ENCODE measurements at regions of chr14 and their contacts with region 1.

Region 1: GRCh38 chr14:75144944-75145343 is 18.1 kb upstream of the NEK9 start:
- DNase-seq: no peak
- H3K4me3 Mint-ChIP-seq: peak overlapping the region; percentile 25
- H3K27ac Mint-ChIP-seq: peak overlapping the region; percentile 78
- H3K4me1 Mint-ChIP-seq: peaks cover 62% of the 10 kb centered on the region
- H3K27me3 Mint-ChIP-seq: no peaks in the 10 kb centered on the region

Region 2: GRCh38 chr14:75158843-75159614 is 14.1 kb after region 1 on chr14:
- intact Hi-C with region 1: loop called (anchors 2 kb)
- DNase-seq: no peak
- H3K4me3 Mint-ChIP-seq: no peak overlapping the region
- H3K27ac Mint-ChIP-seq: no peak overlapping the region
- H3K4me1 Mint-ChIP-seq: peaks cover 47% of the 10 kb centered on the region
- H3K27me3 Mint-ChIP-seq: no peaks in the 10 kb centered on the region

Measured in activated T-helper 1 cell treated with anti-CD3 and anti-CD28 coated beads, Interleukin-12 subunit alpha, Interleukin-12 subunit beta, Interleukin-2, Interleukin-4 antibody, amounts not matched to agents 30 ng/mL and 10 ng/mL and 1 ng/mL, durations not matched to agents 14 hours and 24 hours and 36 hours (primary cell).